ENCODE measurements at regions of chr5 and their contacts with region 1.

Region 1: DNA sequence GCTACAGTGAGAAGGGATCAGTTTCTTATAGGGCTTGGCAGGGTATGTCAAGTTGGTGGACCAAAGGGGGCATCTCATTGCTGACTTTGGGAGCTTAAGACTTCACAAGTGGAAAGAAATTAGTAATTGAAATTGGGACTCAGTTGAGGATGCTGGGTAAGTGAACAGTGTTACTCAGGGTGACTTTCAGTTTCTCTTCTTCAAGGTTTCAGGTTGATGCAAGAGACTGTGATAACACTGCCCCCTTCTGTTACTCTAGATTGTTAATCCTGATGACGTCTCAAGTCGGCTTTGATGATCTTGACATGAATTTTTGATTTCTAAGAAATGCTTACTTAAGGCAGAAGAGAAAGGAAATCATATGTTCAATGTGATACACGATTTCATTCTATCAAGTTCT is 21.3 kb downstream of the KCTD16 start:
- DNase-seq: peak; percentile 47
- ATAC-seq: peak; percentile 81
- H3K4me3 Mint-ChIP-seq: no peak overlapping the region
- H3K27ac Mint-ChIP-seq: no peak overlapping the region
- H3K4me1 Mint-ChIP-seq: peaks cover 22% of the 10 kb centered on the region
- H3K27me3 Mint-ChIP-seq: no peaks in the 10 kb centered on the region
- CTCF ChIP-seq: peak; percentile 58

Region 2: DNA sequence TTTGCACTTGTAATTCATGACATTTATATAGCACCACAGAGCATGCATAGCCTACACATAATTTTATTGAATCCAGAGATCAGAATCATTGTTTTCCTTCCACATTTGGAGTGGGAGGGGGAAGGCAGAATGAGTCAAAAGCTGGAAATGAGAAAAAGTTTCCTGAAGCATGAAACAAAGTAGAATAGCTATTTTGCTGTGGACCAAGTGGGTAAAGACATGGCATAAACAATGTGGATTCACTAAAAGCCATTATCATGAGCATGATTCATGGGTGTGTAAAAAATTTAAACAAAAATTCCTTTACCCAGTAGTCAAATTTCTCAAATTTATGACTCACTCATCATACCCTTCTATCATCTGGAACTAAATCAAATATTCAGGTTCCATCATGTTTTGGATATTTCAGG is 119.5 kb before region 1 on chr5:
- CTCF ChIA-PET with region 1: no interaction called
- POLR2A ChIA-PET with region 1: no interaction called
- intact Hi-C with region 1: no loop called
- DNase-seq: no peak
- ATAC-seq: no peak
- H3K4me3 Mint-ChIP-seq: no peak overlapping the region
- H3K27ac Mint-ChIP-seq: no peak overlapping the region
- H3K4me1 Mint-ChIP-seq: no peaks in the 10 kb centered on the region
- H3K27me3 Mint-ChIP-seq: peaks cover 10% of the 10 kb centered on the region
- CTCF ChIP-seq: no peak

Region 3: GRCh38 chr5:144170276-144171024 is 21.5 kb before region 1 on chr5 and contains the starts of genes KCTD16 and YIPF5:
- CTCF ChIA-PET with region 1: interaction called, 29 read pairs
- POLR2A ChIA-PET with region 1: interaction called, 19 read pairs
- intact Hi-C with region 1: loop called (anchors 2 kb)
- DNase-seq: peak; percentile 99
- ATAC-seq: peak; percentile 99
- H3K4me3 Mint-ChIP-seq: peak within 1 kb of the TSS; percentile 88
- H3K27ac Mint-ChIP-seq: peak within 1 kb of the TSS; percentile 79
- H3K4me1 Mint-ChIP-seq: peaks cover 40% of the 10 kb centered on the region
- H3K27me3 Mint-ChIP-seq: no peaks in the 10 kb centered on the region
- CTCF ChIP-seq: no peak
- total RNA-seq, gene KCTD16: 0.27 to 0.29 TPM
- total RNA-seq, gene YIPF5: 38.5 to 39.7 TPM

Measured in activated CD8-positive, alpha-beta T cell treated with anti-CD3 and anti-CD28 coated beads for 36 hours (primary cell).